ENCODE measurements at regions of chr15 and their contacts with region 1.

Region 1: DNA sequence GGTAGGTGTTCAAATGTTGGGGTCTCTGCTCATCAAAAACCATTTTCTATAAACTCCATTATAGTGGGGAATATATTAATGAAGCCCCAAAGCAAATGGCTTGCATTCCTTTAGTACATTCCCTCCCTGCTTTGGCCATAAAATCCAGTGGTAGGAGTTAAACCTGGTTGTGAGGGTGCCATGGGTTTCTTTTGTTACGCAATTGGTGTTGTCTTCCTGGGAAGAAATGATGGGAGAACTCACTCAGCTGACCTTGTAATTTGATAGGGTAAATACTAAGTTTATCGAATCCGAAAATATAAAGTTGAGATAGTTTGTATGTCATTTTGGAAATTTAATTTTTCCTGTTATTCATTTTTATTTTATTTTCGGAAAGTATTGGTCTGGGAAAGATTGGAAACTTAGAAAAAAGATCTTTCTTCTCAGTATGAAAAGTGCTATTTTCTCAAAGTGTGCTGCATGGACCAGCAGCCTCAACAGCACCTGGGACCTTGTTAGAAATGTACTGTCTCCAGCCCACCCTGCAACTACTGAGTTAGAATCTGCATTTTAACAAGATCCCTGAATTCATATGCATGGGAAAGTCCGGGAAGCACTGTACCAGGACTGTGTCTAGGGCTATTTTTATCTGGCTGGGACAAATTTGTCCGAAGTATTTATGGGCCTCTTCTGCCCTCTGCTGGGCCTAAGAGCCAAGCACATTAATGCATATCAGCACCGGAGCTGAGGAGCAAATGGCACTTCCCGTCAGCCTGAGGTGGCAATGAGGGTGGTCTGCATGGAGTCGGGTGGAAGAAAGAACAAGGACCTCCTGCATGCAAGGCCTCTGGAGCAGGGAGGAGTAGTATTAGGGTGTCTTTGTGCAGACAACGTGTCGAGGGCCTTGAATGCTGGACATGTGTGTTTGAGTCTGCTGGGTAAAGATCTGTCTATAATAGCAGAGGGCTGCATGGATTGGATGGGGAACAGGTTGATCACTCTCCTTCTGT is 54.7 kb downstream of the FAM81A start:
- DNase-seq: peak; percentile 17 to 79 (median 57)
- ATAC-seq: peak; percentile 81
- H3K4me3 ChIP-seq: no peak overlapping the region
- H3K4me3 Mint-ChIP-seq: no peak overlapping the region
- H3K27ac ChIP-seq: no peak overlapping the region
- H3K27ac Mint-ChIP-seq: no peak overlapping the region
- H3K4me1 ChIP-seq: no peaks in the 10 kb centered on the region
- H3K4me1 Mint-ChIP-seq: peaks cover 3% of the 10 kb centered on the region
- H3K27me3 ChIP-seq: no peaks in the 10 kb centered on the region
- H3K27me3 Mint-ChIP-seq: no peaks in the 10 kb centered on the region
- CTCF ChIP-seq: peak; percentile 88

Region 2: DNA sequence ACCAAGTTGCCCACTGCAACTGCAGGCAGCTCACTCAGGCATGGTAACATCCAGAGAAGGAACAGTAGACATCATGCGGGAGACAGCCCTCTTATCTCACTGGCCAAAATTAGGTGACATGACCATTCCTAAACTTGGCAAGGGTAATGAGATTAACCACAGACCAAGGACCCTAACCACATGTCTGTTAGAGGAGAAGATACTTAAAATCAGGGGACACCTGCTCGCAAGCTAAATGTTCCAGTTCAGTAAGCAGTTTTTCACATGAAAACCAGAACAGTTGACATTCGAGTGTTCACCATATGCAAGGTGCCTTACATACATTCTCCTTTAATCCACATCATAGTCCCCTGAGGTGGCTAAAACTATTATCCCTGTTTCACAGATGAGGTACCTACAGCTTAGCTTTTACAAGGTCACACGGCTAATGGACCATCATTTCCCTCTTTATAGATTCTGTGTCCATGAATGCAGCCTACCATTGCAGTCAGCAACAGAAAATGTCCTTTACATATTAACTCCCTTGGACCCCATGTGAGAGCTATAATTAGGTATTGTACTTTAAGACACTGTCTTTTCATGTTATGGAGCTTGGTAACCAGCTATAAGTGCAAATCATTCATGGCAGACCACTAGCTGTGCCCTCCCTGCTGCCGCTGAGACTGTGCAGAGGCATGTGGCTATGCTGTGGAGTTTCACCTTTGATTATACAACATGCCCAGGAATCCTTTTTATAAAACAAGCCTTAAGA is 906.8 kb before region 1 on chr15:
- CTCF ChIA-PET with region 1: no interaction called
- POLR2A ChIA-PET with region 1: no interaction called
- intact Hi-C with region 1: loop called in 1 of 2 experiments (anchors 5 kb)
- DNase-seq: no peak
- ATAC-seq: no peak
- H3K4me3 ChIP-seq: no peak overlapping the region
- H3K4me3 Mint-ChIP-seq: no peak overlapping the region
- H3K27ac ChIP-seq: no peak overlapping the region
- H3K27ac Mint-ChIP-seq: no peak overlapping the region
- H3K4me1 ChIP-seq: no peaks in the 10 kb centered on the region
- H3K4me1 Mint-ChIP-seq: peaks cover 13% of the 10 kb centered on the region
- H3K27me3 ChIP-seq: no peaks in the 10 kb centered on the region
- H3K27me3 Mint-ChIP-seq: peaks cover 8% of the 10 kb centered on the region
- CTCF ChIP-seq: no peak

Region 3: GRCh38 chr15:58980351-58980939 is 512.2 kb before region 1 on chr15:
- CTCF ChIA-PET with region 1: interaction called, 48 read pairs
- POLR2A ChIA-PET with region 1: no interaction called
- intact Hi-C with region 1: loop called (anchors 1 kb)
- DNase-seq: peak in 2 of 9 experiments; percentile 61 to 72
- ATAC-seq: peak; percentile 38
- H3K4me3 ChIP-seq: no peak overlapping the region
- H3K4me3 Mint-ChIP-seq: peak overlapping the region; percentile 29
- H3K27ac ChIP-seq: no peak overlapping the region
- H3K27ac Mint-ChIP-seq: no peak overlapping the region
- H3K4me1 ChIP-seq: peaks cover 23% of the 10 kb centered on the region
- H3K4me1 Mint-ChIP-seq: peaks cover 29% of the 10 kb centered on the region
- H3K27me3 ChIP-seq: no peaks in the 10 kb centered on the region
- H3K27me3 Mint-ChIP-seq: no peaks in the 10 kb centered on the region
- CTCF ChIP-seq: peak; percentile 79

Region 4: DNA sequence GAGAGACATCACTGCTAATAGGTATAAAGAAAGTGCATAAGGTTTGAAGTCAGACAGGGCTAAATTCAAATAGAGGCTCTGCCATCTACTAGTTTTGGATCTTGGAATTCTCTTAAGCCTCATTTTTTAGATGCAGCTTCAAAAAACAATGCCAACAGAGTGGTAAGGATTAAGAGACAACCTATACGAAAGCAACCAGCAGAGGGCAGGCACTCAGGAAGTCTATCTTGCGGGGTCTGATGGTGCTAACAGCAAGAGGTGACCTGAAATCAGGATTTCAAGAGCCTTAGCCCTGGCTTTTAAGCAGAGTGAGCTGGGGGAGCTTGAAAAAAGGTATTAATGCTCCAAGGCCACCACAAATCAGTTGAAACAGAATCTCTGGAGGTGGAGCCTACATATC is 245.3 kb before region 1 on chr15:
- CTCF ChIA-PET with region 1: interaction called, 64 read pairs
- POLR2A ChIA-PET with region 1: no interaction called
- intact Hi-C with region 1: loop called in 1 of 2 experiments (anchors 1 kb)
- DNase-seq: peak; percentile 20 to 76 (median 55)
- ATAC-seq: peak; percentile 68
- H3K4me3 ChIP-seq: no peak overlapping the region
- H3K4me3 Mint-ChIP-seq: no peak overlapping the region
- H3K27ac ChIP-seq: no peak overlapping the region
- H3K27ac Mint-ChIP-seq: no peak overlapping the region
- H3K4me1 ChIP-seq: no peaks in the 10 kb centered on the region
- H3K4me1 Mint-ChIP-seq: peaks cover 3% of the 10 kb centered on the region
- H3K27me3 ChIP-seq: no peaks in the 10 kb centered on the region
- H3K27me3 Mint-ChIP-seq: no peaks in the 10 kb centered on the region
- CTCF ChIP-seq: peak; percentile 48

Region 5: DNA sequence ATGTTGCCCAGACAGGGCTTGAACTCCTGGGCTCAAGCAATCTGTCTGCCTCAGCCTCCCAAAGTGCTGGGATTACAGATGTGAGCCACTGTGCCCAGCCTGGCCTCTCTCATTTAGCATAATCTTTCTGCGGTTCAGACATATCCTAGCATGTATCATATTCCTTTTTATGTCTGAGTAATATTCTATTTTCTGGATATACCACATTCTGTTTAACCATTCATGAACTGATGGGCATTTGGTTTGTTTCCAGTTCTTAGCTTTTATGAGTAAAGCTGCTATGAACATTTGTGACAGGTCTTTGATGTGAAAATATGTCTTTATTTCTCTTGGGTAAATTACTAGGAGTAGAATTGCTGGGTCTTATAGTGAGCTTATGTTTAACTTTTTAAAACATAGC is 31.2 kb before region 1 on chr15:
- CTCF ChIA-PET with region 1: no interaction called
- POLR2A ChIA-PET with region 1: no interaction called
- intact Hi-C with region 1: no loop called
- DNase-seq: no peak
- ATAC-seq: no peak
- H3K4me3 ChIP-seq: no peak overlapping the region
- H3K4me3 Mint-ChIP-seq: no peak overlapping the region
- H3K27ac ChIP-seq: no peak overlapping the region
- H3K27ac Mint-ChIP-seq: no peak overlapping the region
- H3K4me1 ChIP-seq: no peaks in the 10 kb centered on the region
- H3K4me1 Mint-ChIP-seq: no peaks in the 10 kb centered on the region
- H3K27me3 ChIP-seq: peaks cover 0 to under 1% of the 10 kb centered on the region in 2 experiments
- H3K27me3 Mint-ChIP-seq: peaks cover 4% of the 10 kb centered on the region
- CTCF ChIP-seq: no peak

Region 6: GRCh38 chr15:59764775-59765174 is 272.1 kb after region 1 on chr15:
- CTCF ChIA-PET with region 1: no interaction called
- POLR2A ChIA-PET with region 1: no interaction called
- intact Hi-C with region 1: no loop called
- DNase-seq: no peak
- ATAC-seq: no peak
- H3K4me3 ChIP-seq: no peak overlapping the region
- H3K4me3 Mint-ChIP-seq: no peak overlapping the region
- H3K27ac ChIP-seq: no peak overlapping the region
- H3K27ac Mint-ChIP-seq: no peak overlapping the region
- H3K4me1 ChIP-seq: no peaks in the 10 kb centered on the region
- H3K4me1 Mint-ChIP-seq: peaks cover 5% of the 10 kb centered on the region
- H3K27me3 ChIP-seq: no peaks in the 10 kb centered on the region
- H3K27me3 Mint-ChIP-seq: no peaks in the 10 kb centered on the region
- CTCF ChIP-seq: no peak